Dorsolateral prefrontal cortex (tissue), 120 donors: ENCODE measurements at regions of chr22 and their contacts with region 1.

Region 1: DNA sequence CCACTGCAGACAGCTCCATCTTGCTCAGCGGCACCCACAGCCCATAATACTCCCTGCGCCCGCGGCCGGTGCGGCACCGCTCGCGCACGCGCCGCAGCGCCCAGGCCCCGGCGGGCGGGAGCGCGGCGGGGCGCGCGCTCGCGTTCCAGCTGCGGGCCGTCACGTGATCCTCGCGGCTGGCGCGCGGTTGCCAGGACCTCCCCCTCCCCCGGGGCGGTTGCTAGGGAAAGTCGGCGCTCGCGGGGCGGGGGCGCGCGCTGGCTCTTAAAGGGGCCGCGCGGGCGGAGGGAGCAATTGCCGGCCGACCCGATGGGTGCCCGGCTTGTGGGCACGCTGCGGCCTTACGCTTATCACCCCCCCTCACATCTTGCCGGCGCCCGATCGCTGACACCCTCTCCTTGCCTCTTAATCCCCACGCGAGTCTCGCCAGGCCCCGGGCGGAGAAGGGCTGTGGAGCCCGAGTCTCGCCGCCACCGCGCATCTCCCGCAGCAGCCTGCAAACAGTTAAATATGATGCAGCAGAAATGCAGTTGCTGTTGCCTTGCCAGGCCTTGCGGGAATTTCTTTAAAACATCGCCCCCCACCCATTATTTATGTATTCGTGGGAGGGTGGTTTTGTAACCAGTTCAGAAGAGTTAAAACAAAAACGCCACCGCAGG is at the start of gene CBX6:
- DNase-seq: peak; percentile 91 to 96 (median 94)
- H3K4me3 ChIP-seq: peak within 1 kb of the TSS; percentile 60 to 98 (median 85)
- H3K27ac ChIP-seq: peak within 1 kb of the TSS; percentile 86 to 100 (median 99)
- H3K27me3 ChIP-seq: no peaks in the 10 kb centered on the region
- CTCF ChIP-seq: peak in 4 of 56 donors; percentile 3 to 17 (median 7)
- total RNA-seq, gene CBX6: 99.9 to 293 (median 188) TPM

Region 2: DNA sequence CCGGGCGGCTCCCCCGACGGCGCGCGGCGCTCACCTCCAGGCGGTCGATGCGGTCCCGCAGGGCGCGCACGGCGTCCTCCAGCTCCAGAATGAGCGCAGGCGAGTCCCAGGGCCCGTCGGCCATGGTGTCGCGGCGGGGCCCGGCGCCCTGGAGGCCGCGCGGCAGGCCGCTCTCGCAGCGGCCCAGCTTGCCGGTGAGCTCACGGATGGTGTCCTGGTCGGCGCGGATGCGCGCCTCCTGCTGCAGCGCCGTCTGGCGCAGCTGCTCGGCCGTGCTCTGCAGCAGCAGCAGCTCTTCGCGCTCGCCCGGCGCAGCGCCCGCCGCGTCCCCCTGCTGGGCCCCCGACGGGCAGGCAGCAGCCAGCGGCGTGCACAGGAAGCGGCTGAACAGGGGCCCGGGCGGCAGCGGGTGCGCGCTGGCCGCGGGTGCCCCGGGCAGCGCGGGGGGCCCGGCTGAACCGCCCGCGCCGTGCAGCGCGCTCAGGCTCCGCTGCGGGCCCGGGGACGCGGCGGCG is 29.0 kb before region 1 on chr22:
- intact Hi-C with region 1: loop called in 1 of 2 experiments (anchors 2 kb)
- DNase-seq: peak in 1 of 10 donors; percentile 73
- H3K4me3 ChIP-seq: peak overlapping the region; percentile 37 to 83 (median 67)
- H3K27ac ChIP-seq: peak overlapping the region in 54 of 59 donors; percentile 23 to 92 (median 72)
- H3K27me3 ChIP-seq: no peaks in the 10 kb centered on the region
- CTCF ChIP-seq: peak in 31 of 56 donors; percentile 8 to 49 (median 34)

Region 3: DNA sequence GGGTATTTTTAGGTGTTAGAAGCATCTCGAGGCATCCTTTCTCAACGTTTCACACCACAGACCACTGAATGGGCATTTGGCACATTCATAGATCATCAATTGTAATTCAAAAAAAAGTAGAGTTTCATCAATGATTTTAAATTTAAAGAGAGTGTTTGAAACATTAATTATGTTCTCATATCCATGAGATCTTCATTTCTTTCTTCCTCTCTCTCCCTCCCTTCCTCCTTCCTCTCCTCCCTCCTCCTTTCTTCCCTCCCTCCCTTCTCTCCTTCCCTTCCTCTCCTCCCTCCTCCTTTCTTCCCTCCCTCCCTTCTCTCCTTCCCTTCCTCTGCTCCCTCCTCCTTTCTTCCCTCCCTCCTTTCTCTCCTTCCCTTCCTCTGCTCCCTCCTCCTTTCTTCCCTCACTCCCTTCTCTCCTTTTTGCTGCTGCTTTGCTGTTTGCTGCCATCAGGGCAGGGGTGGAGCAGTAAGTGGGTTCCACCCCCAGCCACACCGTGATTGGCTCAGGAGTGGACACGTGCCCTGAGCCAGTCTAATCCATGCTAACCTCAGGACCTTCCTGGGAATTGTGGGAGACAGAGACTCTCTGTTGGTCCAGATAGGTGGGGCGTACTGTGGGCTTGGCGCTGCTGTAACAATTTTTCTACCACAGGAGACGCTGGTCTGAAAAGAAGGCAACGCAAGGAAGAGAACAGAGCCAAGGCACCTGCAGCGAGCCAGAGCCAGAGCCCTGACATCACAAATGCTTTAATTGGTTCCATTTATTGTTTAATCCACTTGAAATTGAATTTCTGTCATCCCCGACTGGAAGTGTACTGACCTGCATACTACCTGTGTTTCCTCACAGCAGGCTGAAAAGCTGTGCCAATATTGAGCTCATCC is 51.4 kb after region 1 on chr22:
- intact Hi-C with region 1: loop called (anchors 2 to 5 kb)
- DNase-seq: peak; percentile 65 to 91 (median 88)
- H3K4me3 ChIP-seq: peak overlapping the region; percentile 2 to 65 (median 45)
- H3K27ac ChIP-seq: peak overlapping the region in 58 of 59 donors; percentile 5 to 89 (median 75)
- H3K27me3 ChIP-seq: no peaks in the 10 kb centered on the region
- CTCF ChIP-seq: peak in 23 of 56 donors; percentile 5 to 53 (median 21)

Region 4: GRCh38 chr22:39003165-39003638 is 130.9 kb after region 1 on chr22:
- intact Hi-C with region 1: loop called (anchors 1 to 10 kb)
- DNase-seq: peak in 6 of 10 donors; percentile 37 to 62 (median 50)
- H3K4me3 ChIP-seq: no peak overlapping the region
- H3K27ac ChIP-seq: no peak overlapping the region
- H3K27me3 ChIP-seq: peaks cover 0 to 5% (median 0%) of the 10 kb centered on the region in 45 donors
- CTCF ChIP-seq: peak; percentile 40 to 82 (median 69)

Region 5: GRCh38 chr22:39152511-39153219 is 280.4 kb after region 1 on chr22 and contains the start of gene CBX7:
- intact Hi-C with region 1: loop called (anchors 2 to 5 kb)
- DNase-seq: peak; percentile 92 to 96 (median 94)
- H3K4me3 ChIP-seq: peak within 1 kb of the TSS; percentile 71 to 99 (median 96)
- H3K27ac ChIP-seq: peak within 1 kb of the TSS; percentile 92 to 100 (median 99)
- H3K27me3 ChIP-seq: no peaks in the 10 kb centered on the region
- CTCF ChIP-seq: peak in 17 of 56 donors; percentile 7 to 43 (median 21)
- total RNA-seq, gene CBX7: 112 to 229 (median 170) TPM